Adrenal gland (tissue), 19 donors: ENCODE measurements at regions of chr6 and their contacts with region 1.

Region 1: GRCh38 chr6:131909408-131910218 is 41.6 kb downstream of the CCN2 start:
- DNase-seq: peak; percentile 56 to 92 (median 81)
- H3K4me3 ChIP-seq: no peak overlapping the region
- H3K27ac ChIP-seq: no peak overlapping the region
- H3K4me1 ChIP-seq: no peaks in the 10 kb centered on the region
- H3K27me3 ChIP-seq: no peaks in the 10 kb centered on the region
- CTCF ChIP-seq: peak; percentile 72 to 92 (median 82)
- POLR2A ChIP-seq: no peak

Region 2: DNA sequence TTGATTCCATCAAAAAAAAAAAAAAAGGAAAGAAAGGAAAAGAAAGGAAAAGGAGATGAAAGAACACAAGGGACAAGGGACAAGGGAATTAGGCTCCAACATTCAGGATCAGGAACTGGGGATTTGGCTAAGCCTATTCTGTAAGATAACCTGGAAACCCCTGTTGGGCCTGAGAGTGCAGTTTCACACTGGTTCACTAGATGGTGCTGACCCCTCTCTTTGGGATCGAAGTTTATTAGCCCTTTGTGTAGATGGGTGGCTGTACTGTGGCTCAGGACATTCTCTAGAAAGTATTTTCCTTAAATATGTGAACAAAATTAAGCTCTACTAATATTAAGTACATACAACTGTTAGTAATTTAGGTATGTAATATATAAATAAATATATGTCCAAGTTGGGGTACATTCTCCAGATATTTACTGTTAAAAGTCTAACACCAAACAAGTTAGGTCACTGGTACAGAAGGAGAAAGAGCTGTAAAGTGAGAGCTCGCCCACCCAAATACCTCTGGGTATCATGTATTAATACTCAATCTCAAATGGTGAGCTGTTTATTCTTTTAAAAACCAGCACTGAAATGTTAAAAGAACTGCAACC is 214.7 kb before region 1 on chr6:
- intact Hi-C with region 1: loop called in 1 of 2 experiments (anchors 5 kb)
- DNase-seq: peak; percentile 33 to 78 (median 44)
- H3K4me3 ChIP-seq: no peak overlapping the region
- H3K27ac ChIP-seq: no peak overlapping the region
- H3K4me1 ChIP-seq: no peaks in the 10 kb centered on the region
- H3K27me3 ChIP-seq: no peaks in the 10 kb centered on the region
- CTCF ChIP-seq: peak; percentile 52 to 74 (median 68)
- POLR2A ChIP-seq: no peak

Region 3: DNA sequence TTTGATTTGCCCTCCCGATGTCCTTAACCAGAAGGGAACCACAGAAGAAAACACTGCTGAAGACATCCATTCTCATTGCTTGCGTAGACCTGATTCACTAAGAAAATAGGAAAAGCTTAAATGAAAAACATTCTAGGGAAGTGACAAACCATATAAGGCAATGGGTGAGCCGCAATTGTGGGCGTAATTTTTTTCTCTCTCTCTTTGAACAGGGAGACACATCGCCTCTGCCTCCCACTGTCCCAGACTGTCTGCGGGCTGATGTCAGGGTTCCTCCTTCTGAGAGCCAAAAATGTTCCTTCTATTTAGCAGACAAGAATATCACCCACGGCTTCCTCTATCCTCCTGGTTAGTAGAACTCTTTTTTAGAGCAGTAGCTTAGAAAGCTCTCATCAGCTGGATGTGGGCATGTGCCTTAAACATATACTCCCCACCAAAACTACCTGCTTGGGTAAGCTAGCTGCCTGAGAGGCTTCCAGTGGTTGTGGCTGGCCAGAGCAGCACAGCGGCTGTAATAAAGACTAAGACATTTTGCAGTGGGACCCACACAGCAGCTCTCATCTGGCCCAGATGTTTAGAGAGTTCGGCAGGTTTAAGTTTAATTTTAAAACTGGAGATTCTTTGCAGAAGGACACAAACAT is 176.1 kb before region 1 on chr6:
- intact Hi-C with region 1: no loop called
- DNase-seq: peak in 2 of 7 donors; percentile 4 to 55
- H3K4me3 ChIP-seq: no peak overlapping the region
- H3K27ac ChIP-seq: no peak overlapping the region
- H3K4me1 ChIP-seq: no peaks in the 10 kb centered on the region
- H3K27me3 ChIP-seq: no peaks in the 10 kb centered on the region
- CTCF ChIP-seq: no peak
- POLR2A ChIP-seq: no peak

Region 4: GRCh38 chr6:131773284-131773950 is 136.2 kb before region 1 on chr6:
- intact Hi-C with region 1: loop called in 1 of 2 experiments (anchors 10 kb)
- DNase-seq: no peak
- H3K4me3 ChIP-seq: no peak overlapping the region
- H3K27ac ChIP-seq: peak overlapping the region in 1 of 5 donors; percentile 41
- H3K4me1 ChIP-seq: no peaks in the 10 kb centered on the region
- H3K27me3 ChIP-seq: no peaks in the 10 kb centered on the region
- CTCF ChIP-seq: no peak
- POLR2A ChIP-seq: no peak

Region 5: DNA sequence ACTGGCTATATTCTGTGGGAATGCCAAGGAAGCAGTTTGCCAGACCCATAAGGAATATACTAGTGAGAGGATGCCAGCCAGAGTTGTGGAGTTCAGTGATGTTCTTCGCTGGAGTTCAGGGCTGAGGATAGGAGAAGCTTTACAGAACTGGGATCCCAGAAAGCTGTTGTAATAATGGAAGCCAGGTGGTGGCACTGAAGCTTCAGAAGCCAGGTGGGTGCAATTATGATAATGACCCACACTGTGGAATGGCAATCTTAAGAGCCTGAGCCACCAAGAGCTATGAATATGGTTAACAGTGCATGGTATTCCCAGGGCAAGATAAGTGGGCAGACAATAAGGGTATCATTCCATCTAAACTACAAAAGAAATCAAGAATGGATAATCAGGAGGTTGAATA is 126.8 kb before region 1 on chr6:
- intact Hi-C with region 1: loop called (anchors 5 to 10 kb)
- DNase-seq: peak in 1 of 7 donors; percentile 23
- H3K4me3 ChIP-seq: no peak overlapping the region
- H3K27ac ChIP-seq: no peak overlapping the region
- H3K4me1 ChIP-seq: no peaks in the 10 kb centered on the region
- H3K27me3 ChIP-seq: no peaks in the 10 kb centered on the region
- CTCF ChIP-seq: peak in 5 of 6 experiments; percentile 26 to 47 (median 40)
- POLR2A ChIP-seq: no peak